ENCODE measurements at regions of chr11 and their contacts with region 1.

Region 1: GRCh38 chr11:65606876-65607613 is 7.0 kb downstream of the MAP3K11 start:
- DNase-seq: peak; percentile 96
- H3K4me3 ChIP-seq: no peak overlapping the region
- H3K27ac ChIP-seq: no peak overlapping the region
- H3K4me1 ChIP-seq: peaks cover 41% of the 10 kb centered on the region
- H3K27me3 ChIP-seq: no peaks in the 10 kb centered on the region
- CTCF ChIP-seq: no peak
- POLR2A ChIP-seq: peak; percentile 68

Region 2: GRCh38 chr11:65588199-65589054 is 18.6 kb before region 1 on chr11:
- CTCF ChIA-PET with region 1: interaction called, 54 read pairs
- POLR2A ChIA-PET with region 1: no interaction called
- dilution Hi-C with region 1: no loop called
- intact Hi-C with region 1: loop called (anchors 1 kb)
- DNase-seq: peak; percentile 54
- H3K4me3 ChIP-seq: no peak overlapping the region
- H3K27ac ChIP-seq: no peak overlapping the region
- H3K4me1 ChIP-seq: peaks cover 7% of the 10 kb centered on the region
- H3K27me3 ChIP-seq: no peaks in the 10 kb centered on the region
- CTCF ChIP-seq: peak; percentile 63 to 73
- POLR2A ChIP-seq: no peak

Measured in endothelial cell of umbilical vein (primary cell).